Mammary epithelial cell (primary cell): ENCODE measurements at regions of chr16 and their contacts with region 1.

Region 1: DNA sequence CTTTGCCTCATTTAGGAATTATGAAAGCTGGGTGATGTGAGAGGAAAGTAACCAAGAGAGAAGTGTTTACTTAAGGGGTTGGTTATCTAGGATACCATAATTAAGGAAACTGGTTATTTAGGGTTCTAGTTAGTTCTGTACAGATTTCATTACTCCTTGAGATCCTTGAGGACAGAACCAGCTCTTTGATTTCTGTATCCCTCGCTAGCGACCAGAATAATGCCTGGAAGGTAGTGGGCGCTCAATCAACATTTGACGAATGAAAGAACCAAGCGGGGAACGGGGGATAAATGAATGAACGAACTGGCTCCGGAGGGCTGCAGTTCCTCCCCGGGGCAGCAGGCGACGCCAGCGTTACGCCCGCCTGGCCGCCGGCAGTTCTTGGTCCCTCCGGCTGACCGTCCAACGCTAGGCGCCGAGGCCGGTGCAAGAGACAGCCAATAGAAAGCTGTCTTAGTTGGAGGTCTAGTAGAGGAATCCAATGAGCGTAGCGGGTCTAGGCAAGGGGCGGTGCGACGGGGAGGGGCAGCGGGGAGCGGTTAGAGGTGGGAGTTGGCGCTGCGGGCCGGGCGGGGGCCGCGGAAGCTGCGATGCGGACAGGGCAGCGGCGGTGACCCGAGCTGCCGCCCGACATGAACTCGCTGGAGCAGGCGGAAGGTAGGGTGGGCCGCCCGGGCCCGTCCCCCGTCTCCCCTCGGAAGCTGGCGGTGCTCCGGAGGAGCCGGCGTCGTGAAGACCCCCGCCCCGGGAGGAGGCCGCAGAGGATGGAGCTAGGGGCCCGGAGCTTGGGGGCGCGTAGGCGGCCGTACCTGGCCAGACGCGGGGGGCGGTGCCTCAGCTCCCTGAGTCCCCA is at the start of gene CNEP1R1:
- DNase-seq: peak; percentile 97
- H3K4me3 ChIP-seq: peak within 1 kb of the TSS; percentile 71 to 98 (median 79)
- H3K27ac ChIP-seq: peak within 1 kb of the TSS; percentile 43
- H3K4me1 ChIP-seq: no peaks in the 10 kb centered on the region
- H3K27me3 ChIP-seq: no peaks in the 10 kb centered on the region
- CTCF ChIP-seq: peak; percentile 99 to 100
- total RNA-seq, gene CNEP1R1: 19.9 to 32.2 TPM

Region 2: GRCh38 chr16:49958448-49958847 is 66.5 kb before region 1 on chr16:
- CTCF ChIA-PET with region 1: interaction called, 10 read pairs
- dilution Hi-C with region 1: no loop called
- in situ Hi-C with region 1: no loop called
- intact Hi-C with region 1: no loop called
- DNase-seq: no peak
- H3K4me3 ChIP-seq: no peak overlapping the region
- H3K27ac ChIP-seq: no peak overlapping the region
- H3K4me1 ChIP-seq: peaks cover 5% of the 10 kb centered on the region
- H3K27me3 ChIP-seq: no peaks in the 10 kb centered on the region
- CTCF ChIP-seq: no peak

Region 3: DNA sequence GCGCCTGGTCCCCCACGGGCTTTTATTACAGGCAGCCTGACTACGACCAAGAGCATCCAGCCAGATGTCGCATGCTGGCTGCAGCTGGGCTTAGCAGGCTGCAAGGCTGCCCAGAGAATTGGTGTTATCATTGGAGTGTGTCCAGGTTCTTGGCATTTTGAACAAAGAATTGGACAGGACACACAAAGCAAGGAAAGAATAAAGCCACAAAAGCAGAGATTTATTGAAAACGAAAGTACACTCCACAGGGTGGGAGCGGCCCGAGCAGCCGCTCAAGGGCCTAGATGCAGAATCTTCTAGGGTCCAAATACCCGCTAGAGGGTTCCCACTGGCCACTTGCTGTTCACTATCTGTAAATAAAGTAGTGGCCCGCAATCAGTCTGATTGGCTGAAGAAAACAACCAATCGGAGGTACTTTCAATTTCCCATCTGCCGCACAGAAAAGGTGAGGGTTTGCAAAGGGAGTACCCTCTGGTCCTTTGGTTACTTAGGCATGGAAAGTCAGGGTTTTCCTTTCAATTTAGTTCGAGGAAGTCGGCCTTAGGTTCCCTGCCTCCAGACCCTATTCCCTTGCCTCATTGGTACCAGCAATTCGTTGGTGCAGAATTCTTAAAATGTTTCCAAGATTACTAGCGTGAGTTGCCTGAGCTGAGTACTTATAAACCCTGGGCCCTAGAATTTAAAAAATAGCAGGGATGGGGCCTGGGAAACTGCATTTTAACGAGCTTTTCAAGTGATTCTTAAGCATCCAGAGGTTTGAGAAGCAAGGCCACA is 38.4 kb before region 1 on chr16:
- CTCF ChIA-PET with region 1: no interaction called
- dilution Hi-C with region 1: no loop called
- in situ Hi-C with region 1: no loop called
- intact Hi-C with region 1: no loop called
- DNase-seq: no peak
- H3K4me3 ChIP-seq: no peak overlapping the region
- H3K27ac ChIP-seq: no peak overlapping the region
- H3K4me1 ChIP-seq: no peaks in the 10 kb centered on the region
- H3K27me3 ChIP-seq: no peaks in the 10 kb centered on the region
- CTCF ChIP-seq: no peak

Region 4: GRCh38 chr16:50065624-50066481 is 40.9 kb after region 1 on chr16 and contains the start of gene HEATR3:
- CTCF ChIA-PET with region 1: no interaction called
- dilution Hi-C with region 1: no loop called
- in situ Hi-C with region 1: no loop called
- intact Hi-C with region 1: loop called (anchors 2 kb)
- DNase-seq: peak; percentile 84
- H3K4me3 ChIP-seq: peak within 1 kb of the TSS; percentile 87 to 100 (median 99)
- H3K27ac ChIP-seq: peak within 1 kb of the TSS; percentile 65
- H3K4me1 ChIP-seq: peaks cover 15% of the 10 kb centered on the region
- H3K27me3 ChIP-seq: no peaks in the 10 kb centered on the region
- CTCF ChIP-seq: no peak
- total RNA-seq, gene HEATR3: 18.7 to 23.8 TPM

Region 5: DNA sequence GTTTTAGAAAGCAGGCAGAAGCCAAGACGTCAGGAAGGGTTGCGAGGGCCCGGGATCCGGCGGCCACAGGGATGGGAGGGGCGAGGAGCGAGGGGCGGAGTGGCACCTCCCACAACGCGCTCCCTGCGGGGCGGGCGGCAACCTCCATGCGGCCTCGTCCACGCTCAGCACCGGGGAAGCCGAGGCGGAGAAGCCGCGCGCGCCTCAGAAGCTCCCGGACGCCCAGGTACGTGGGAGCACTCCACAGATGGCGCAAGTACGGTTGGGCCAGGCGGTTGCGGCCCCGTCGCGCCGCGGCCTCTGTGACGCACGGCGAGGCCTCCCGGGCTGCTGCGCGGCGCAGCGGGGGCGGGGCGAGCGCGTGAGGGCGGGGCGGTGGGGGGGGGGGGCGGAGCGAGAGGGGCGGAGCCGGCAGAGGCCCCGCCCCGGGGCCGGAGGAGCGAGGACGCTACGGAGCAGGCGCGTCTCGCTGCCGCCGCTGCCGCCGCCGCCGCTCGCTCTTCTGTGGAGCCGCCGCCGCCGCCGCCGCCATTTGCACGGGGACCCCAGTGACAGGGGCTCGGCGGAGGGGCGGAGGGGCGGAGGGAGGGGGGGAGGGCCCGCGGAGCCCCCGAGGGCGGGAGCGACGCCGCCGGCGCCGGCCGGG is 128.0 kb after region 1 on chr16 and contains the start of gene TENT4B:
- CTCF ChIA-PET with region 1: no interaction called
- dilution Hi-C with region 1: no loop called
- in situ Hi-C with region 1: no loop called
- intact Hi-C with region 1: loop called (anchors 5 kb)
- DNase-seq: peak; percentile 79
- H3K4me3 ChIP-seq: peak within 1 kb of the TSS; percentile 69 to 99 (median 95)
- H3K27ac ChIP-seq: peak within 1 kb of the TSS; percentile 87
- H3K4me1 ChIP-seq: peaks cover 16% of the 10 kb centered on the region
- H3K27me3 ChIP-seq: no peaks in the 10 kb centered on the region
- CTCF ChIP-seq: no peak
- total RNA-seq, gene TENT4B: 10.3 to 14.5 TPM

Region 6: GRCh38 chr16:50210266-50211038 is 185.5 kb after region 1 on chr16:
- CTCF ChIA-PET with region 1: interaction called, 33 read pairs
- dilution Hi-C with region 1: no loop called
- in situ Hi-C with region 1: loop called (anchors 10 kb)
- intact Hi-C with region 1: loop called (anchors 1 kb)
- DNase-seq: peak; percentile 62
- H3K4me3 ChIP-seq: no peak overlapping the region
- H3K27ac ChIP-seq: no peak overlapping the region
- H3K4me1 ChIP-seq: peaks cover 36% of the 10 kb centered on the region
- H3K27me3 ChIP-seq: no peaks in the 10 kb centered on the region
- CTCF ChIP-seq: peak; percentile 60 to 77

Region 7: GRCh38 chr16:50368410-50369132 is 343.7 kb after region 1 on chr16 and contains the start of gene BRD7:
- CTCF ChIA-PET with region 1: no interaction called
- dilution Hi-C with region 1: no loop called
- in situ Hi-C with region 1: no loop called
- intact Hi-C with region 1: loop called (anchors 2 kb)
- DNase-seq: peak; percentile 42
- H3K4me3 ChIP-seq: peak within 1 kb of the TSS; percentile 60 to 83 (median 76)
- H3K27ac ChIP-seq: peak within 1 kb of the TSS; percentile 75
- H3K4me1 ChIP-seq: peaks cover 17% of the 10 kb centered on the region
- H3K27me3 ChIP-seq: no peaks in the 10 kb centered on the region
- CTCF ChIP-seq: peak in 1 of 2 donors; percentile 39
- total RNA-seq, gene BRD7: 22.3 to 69.7 TPM

Region 8: DNA sequence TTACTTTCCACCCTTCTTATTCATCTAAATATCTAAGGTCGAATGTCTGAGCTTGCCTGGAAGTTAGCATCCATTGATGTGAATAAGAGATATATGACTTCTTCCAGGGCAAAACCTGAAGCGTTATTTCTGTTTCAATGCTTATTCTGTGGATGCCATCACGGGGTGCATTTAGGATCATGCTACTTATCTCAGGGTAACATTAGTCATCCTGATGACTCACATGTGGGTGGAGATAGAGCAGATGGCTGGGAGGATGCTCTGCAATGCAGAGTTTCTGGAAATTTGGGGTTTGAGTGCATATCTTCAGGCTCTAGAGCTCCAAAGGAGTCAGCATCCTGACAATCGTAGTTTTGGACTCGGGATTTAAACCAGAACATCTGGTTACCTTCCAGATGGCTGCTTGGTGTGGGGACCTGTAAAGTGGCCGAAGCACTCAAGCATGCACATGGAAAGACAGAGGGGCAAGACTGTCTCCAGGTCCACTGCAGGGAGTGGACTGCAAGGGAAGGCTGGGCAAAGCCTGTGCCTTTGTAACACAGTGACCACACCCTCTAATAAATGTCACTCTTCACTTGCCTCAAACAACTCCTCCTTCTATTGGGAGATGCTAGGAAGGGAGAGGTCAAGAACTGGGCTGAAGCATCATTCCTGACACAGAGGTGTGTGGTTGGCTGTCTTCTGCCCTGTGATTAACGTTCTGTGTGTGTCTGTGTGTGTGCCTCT is 1301.4 kb after region 1 on chr16:
- CTCF ChIA-PET with region 1: interaction called, 33 read pairs
- dilution Hi-C with region 1: no loop called
- in situ Hi-C with region 1: no loop called
- intact Hi-C with region 1: no loop called
- DNase-seq: peak; percentile 80
- H3K4me3 ChIP-seq: no peak overlapping the region
- H3K27ac ChIP-seq: peak overlapping the region; percentile 32
- H3K4me1 ChIP-seq: peaks cover 26% of the 10 kb centered on the region
- H3K27me3 ChIP-seq: no peaks in the 10 kb centered on the region
- CTCF ChIP-seq: no peak